ENCODE measurements at regions of chr10 and their contacts with region 1.

Region 1: GRCh38 chr10:88270871-88271713 is 312.0 kb downstream of the RNLS start:
- DNase-seq: peak; percentile 70
- H3K4me3 Mint-ChIP-seq: peak overlapping the region; percentile 40
- H3K27ac Mint-ChIP-seq: peak overlapping the region; percentile 90
- H3K4me1 Mint-ChIP-seq: peaks cover 45% of the 10 kb centered on the region
- H3K27me3 Mint-ChIP-seq: peaks cover 1% of the 10 kb centered on the region

Region 2: GRCh38 chr10:87817609-87818504 is 453.2 kb before region 1 on chr10 and contains the start of gene ATAD1:
- CTCF ChIA-PET with region 1: no interaction called
- POLR2A ChIA-PET with region 1: interaction called, 4 read pairs
- intact Hi-C with region 1: loop called (anchors 5 kb)
- DNase-seq: peak; percentile 93
- H3K4me3 Mint-ChIP-seq: peak within 1 kb of the TSS; percentile 97
- H3K27ac Mint-ChIP-seq: peak within 1 kb of the TSS; percentile 98
- H3K4me1 Mint-ChIP-seq: peaks cover 29% of the 10 kb centered on the region
- H3K27me3 Mint-ChIP-seq: no peaks in the 10 kb centered on the region
- total RNA-seq, gene ATAD1: 39.4 to 42.8 TPM

Region 3: DNA sequence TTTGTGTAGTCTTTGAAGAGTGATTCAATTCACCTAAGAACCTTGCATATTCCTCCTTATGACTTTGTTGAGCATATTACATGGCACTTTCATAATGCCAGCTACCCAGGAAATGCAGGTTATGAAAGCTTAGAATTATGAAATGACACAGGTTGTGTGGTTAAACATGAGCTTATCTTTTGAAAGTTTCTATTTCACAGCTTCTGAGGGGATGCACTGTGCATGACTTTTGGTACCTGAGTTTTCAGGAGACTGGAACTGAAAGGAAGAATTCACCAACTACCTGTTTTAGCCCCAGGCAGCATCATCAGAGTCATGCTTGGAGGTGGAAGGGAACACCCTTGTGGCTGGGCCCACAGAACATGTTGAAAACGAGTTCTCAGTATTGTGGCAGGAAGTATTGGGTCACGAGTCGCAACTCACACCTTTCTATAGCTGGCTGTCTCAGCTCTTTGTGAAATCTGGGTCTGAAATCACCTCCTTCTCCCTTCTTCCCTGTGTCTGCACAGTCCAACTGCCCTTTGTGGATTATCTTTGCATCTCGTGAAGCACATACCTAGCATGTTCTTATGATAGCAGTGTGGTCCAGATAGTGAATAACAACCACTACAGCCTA is 179.5 kb before region 1 on chr10:
- CTCF ChIA-PET with region 1: interaction called, 8 read pairs
- POLR2A ChIA-PET with region 1: interaction called, 24 read pairs
- intact Hi-C with region 1: loop called (anchors 1 kb)
- DNase-seq: peak; percentile 88
- H3K4me3 Mint-ChIP-seq: no peak overlapping the region
- H3K27ac Mint-ChIP-seq: peak overlapping the region; percentile 36
- H3K4me1 Mint-ChIP-seq: peaks cover 36% of the 10 kb centered on the region
- H3K27me3 Mint-ChIP-seq: peaks cover 17% of the 10 kb centered on the region

Region 4: GRCh38 chr10:88152720-88153119 is 118.4 kb before region 1 on chr10:
- CTCF ChIA-PET with region 1: no interaction called
- POLR2A ChIA-PET with region 1: interaction called, 5 read pairs
- intact Hi-C with region 1: loop called (anchors 1 kb)
- DNase-seq: peak; percentile 77
- H3K4me3 Mint-ChIP-seq: no peak overlapping the region
- H3K27ac Mint-ChIP-seq: peak overlapping the region; percentile 89
- H3K4me1 Mint-ChIP-seq: peaks cover 22% of the 10 kb centered on the region
- H3K27me3 Mint-ChIP-seq: no peaks in the 10 kb centered on the region

Region 5: DNA sequence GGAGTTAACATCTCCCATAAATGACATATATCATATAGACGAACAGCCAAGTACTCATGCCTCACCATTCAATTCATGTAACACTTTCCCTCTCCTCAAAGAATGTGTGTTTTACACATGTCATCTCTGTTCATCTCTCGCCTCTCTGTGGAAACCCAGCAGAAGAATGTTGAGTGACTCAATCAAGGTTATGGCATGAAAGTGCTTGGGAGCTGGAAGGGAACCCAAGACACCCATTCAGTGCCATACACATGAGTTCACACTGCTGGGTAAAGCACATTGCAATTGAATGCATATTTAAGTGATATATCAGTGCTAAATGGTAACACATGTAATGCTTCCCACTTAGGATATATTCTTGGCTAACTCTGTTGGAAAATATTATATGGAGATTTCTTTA is 84.8 kb before region 1 on chr10:
- CTCF ChIA-PET with region 1: no interaction called
- POLR2A ChIA-PET with region 1: no interaction called
- intact Hi-C with region 1: no loop called
- DNase-seq: no peak
- H3K4me3 Mint-ChIP-seq: no peak overlapping the region
- H3K27ac Mint-ChIP-seq: no peak overlapping the region
- H3K4me1 Mint-ChIP-seq: peaks cover 11% of the 10 kb centered on the region
- H3K27me3 Mint-ChIP-seq: no peaks in the 10 kb centered on the region

Region 6: GRCh38 chr10:88254091-88254490 is 17.0 kb before region 1 on chr10:
- CTCF ChIA-PET with region 1: no interaction called
- POLR2A ChIA-PET with region 1: interaction called, 3 read pairs
- intact Hi-C with region 1: loop called (anchors 1 kb)
- DNase-seq: peak; percentile 31
- H3K4me3 Mint-ChIP-seq: no peak overlapping the region
- H3K27ac Mint-ChIP-seq: no peak overlapping the region
- H3K4me1 Mint-ChIP-seq: peaks cover 5% of the 10 kb centered on the region
- H3K27me3 Mint-ChIP-seq: no peaks in the 10 kb centered on the region

Region 7: GRCh38 chr10:88670497-88670896 is 399.4 kb after region 1 on chr10:
- CTCF ChIA-PET with region 1: no interaction called
- POLR2A ChIA-PET with region 1: no interaction called
- intact Hi-C with region 1: loop called (anchors 1 kb)
- DNase-seq: peak; percentile 33
- H3K4me3 Mint-ChIP-seq: no peak overlapping the region
- H3K27ac Mint-ChIP-seq: peak overlapping the region; percentile 21
- H3K4me1 Mint-ChIP-seq: peaks cover 18% of the 10 kb centered on the region
- H3K27me3 Mint-ChIP-seq: peaks cover 7% of the 10 kb centered on the region

Region 8: DNA sequence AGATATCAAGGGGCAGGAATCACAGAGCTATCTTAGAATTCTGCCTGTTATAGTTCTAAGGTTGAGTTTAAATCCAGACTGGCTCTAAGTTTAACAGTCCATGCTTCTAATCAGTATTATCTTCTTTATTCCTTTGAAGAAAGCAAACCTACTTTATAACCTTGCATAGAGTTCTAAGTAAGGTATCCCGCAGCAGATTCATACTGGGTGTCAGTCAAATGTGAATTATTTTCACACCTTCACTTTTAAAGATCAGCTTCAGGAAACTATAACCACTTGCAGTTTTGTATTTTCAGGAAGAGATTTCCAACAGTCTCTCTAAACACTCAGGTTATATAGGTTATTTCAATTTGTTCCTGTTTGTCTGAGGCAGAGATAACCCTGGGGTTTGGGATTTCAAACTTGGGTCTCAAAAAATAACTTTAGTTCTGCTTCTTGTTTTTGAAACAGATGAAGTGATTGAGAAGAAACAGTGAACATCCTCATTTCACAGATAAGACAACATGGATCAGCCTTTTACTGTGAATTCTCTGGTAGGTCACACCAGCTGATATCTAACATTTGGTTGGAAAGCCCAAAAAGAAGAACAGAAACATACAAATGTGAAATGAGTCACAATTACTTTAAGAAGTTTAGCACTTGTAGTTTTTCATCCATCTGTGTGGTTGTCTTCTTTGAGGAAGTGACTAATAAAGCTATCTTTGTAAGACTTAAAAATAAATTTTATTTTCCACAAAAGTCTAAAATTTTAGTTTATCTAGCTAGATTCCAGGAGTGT is 630.3 kb after region 1 on chr10:
- CTCF ChIA-PET with region 1: no interaction called
- POLR2A ChIA-PET with region 1: no interaction called
- intact Hi-C with region 1: loop called (anchors 5 kb)
- DNase-seq: no peak
- H3K4me3 Mint-ChIP-seq: no peak overlapping the region
- H3K27ac Mint-ChIP-seq: peak overlapping the region; percentile 85
- H3K4me1 Mint-ChIP-seq: peaks cover 54% of the 10 kb centered on the region
- H3K27me3 Mint-ChIP-seq: no peaks in the 10 kb centered on the region

Measured in activated CD4-positive, alpha-beta memory T cell treated with anti-CD3 and anti-CD28 coated beads for 36 hours (primary cell).